Left cardiac atrium (tissue), 4 donors: ENCODE measurements at regions of chr7 and their contacts with region 1.

Region 1: GRCh38 chr7:73667344-73668102 is at the start of gene VPS37D:
- DNase-seq: peak; percentile 92
- ATAC-seq: peak; percentile 96
- total RNA-seq, gene VPS37D: 1.4 to 2.5 TPM

Region 2: DNA sequence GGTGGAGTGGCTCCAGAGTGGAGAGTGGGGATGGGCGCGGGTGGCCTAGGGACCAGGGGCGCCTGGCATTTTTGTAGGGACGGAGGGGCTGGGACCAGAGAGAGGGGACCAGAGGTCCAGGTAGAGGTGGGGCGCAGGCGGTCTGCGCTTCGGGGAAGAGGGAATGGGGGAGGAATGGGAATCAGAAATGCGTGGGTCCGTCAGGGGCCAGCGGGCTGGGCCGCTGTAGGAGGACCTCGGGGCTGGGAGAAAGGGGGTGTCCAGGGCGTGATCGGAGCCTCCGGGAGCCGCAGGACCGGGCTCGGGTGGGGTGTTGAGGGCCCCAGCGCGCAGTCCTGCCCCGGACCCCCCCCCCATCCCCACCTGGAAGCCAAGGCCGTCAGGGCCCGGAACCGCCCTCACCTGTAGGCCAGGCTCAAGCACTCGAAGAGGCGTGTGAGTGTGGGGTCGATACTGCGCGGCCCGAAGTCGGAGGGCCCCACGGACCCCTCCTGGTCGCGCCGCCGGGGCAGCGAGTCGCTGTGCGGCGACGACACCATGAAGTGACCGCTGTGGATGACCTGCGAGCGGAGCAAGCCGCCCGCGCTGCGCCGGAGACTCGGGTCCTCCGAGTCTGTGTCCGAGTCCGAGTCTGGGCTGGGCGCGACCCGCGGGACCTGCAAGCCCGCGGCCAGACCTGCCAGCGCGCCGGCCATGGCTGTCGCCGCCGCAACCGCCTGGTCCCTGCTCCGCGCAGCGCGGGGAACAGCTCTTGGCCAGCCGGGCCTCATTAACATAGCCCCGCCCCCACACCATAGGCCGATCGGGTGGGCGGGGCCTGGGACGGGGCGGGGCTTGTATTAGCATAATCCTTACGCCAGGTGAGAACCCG is 43.5 kb before region 1 on chr7 and contains the start of gene MLXIPL:
- intact Hi-C with region 1: loop called in 1 of 2 experiments (anchors 5 kb)
- DNase-seq: peak; percentile 82
- ATAC-seq: peak; percentile 85 to 95
- total RNA-seq, gene MLXIPL: 14.0 to 29.1 TPM

Region 3: GRCh38 chr7:73721377-73721817 is 53.9 kb after region 1 on chr7:
- intact Hi-C with region 1: loop called in 1 of 2 experiments (anchors 5 kb)
- DNase-seq: peak; percentile 72
- ATAC-seq: peak; percentile 55 to 76